Activated CD4-positive, alpha-beta T cell treated with anti-CD3 and anti-CD28 coated beads, Interleukin-2, amount 10 ng/mL, durations not matched to agents 24 days and 14 days (primary cell): ENCODE measurements at regions of chr4 and their contacts with region 1.

Region 1: DNA sequence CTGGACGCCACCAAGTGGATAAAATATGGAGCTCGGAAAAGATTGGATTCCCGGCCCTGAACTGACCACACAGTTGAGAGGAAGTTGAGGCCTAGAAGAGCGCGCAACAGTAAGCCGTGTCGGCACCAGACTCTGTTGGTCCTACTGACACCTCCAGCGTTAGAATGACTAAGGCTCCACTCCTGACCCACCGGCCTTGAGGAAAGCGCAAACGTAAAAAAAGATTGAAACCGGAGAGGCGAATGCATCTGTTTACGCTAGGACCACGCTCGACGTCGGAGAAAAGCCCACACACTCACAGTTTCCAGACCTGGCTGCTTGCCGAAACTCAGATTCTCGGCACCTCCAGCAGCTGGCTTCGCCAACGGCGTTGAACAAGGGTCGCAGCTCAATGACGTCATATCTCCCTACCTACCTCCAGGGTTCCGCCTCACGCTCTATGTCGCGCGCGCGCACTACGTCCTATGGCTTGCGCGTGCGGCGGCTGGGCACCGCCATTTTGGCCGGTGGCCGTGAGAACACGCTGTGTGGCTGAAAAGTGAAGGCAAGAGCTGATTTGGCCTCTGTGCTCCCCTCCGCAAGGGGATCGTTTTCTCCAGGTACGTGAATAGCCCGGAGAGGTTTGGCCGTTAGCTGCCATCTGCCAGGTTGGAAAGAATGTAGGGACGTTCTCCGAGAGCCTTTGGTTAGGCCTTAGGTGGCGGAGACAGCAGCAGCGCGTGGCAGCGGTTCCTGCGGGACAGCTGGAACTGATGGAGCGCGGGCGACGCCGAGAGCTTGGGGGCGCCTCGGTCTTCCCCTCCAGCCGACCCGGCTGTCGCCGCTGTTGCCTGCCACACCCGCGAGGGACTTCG is at the starts of genes ABCE1 and ANAPC10:
- DNase-seq: peak; percentile 99
- H3K4me3 Mint-ChIP-seq: peak within 1 kb of the TSS; percentile 96
- H3K27ac Mint-ChIP-seq: peak within 1 kb of the TSS; percentile 99
- H3K4me1 Mint-ChIP-seq: peaks cover 24% of the 10 kb centered on the region
- H3K27me3 Mint-ChIP-seq: no peaks in the 10 kb centered on the region
- total RNA-seq, gene ABCE1: 191 and 194 TPM in 2 replicates
- total RNA-seq, gene ANAPC10: 26.7 and 30.4 TPM in 2 replicates

Region 2: DNA sequence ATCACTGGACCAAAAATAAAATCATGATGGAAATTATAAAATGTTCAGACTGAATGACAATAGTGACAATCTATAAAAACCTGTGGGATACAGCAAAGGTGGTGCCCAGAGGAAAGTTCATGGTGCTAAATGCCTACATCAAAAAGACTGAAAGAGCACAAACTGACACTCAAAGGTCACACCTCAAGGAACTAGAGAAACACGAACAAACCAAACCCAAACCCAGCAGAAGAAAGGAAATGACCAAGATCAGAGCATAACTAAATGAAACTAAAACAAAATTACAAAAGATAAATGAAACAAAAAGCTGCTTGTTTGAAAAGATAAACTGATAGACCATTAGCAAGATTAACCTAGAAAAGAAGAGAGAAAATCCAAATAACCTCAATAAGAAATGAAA is 78.7 kb before region 1 on chr4:
- intact Hi-C with region 1: loop called (anchors 2 kb)
- DNase-seq: peak; percentile 76
- H3K4me3 Mint-ChIP-seq: peak overlapping the region; percentile 70
- H3K27ac Mint-ChIP-seq: peak overlapping the region; percentile 86
- H3K4me1 Mint-ChIP-seq: peaks cover 24% of the 10 kb centered on the region
- H3K27me3 Mint-ChIP-seq: no peaks in the 10 kb centered on the region

Region 3: DNA sequence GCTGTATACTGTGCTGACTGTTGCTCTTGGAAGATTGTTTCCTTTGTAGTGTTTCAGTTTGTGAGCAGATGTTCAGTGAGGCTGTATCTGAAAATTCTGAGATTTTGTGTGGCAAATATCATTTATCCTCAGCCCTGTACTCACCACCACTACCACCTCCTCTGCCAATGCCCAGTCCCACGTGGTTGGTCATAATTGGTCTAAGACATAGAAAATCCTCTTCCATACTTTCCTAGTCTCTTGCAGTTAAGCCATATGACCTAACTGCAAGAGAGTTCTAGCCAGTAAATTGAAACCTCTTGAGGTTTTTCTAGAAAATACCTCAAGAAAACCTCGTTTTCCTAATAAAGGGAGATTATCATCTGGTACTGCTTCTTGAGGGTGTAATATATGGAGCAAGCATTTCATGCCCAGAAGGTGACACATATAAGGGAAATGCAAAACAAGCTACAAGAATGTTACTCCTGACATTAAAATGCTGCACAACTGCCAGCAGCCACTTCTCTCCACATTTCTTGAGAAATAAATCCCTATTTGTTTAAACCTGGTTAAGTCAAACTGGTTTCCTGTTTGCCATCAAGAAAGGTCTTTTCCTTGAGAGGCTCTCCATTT is 32.8 kb after region 1 on chr4:
- intact Hi-C with region 1: loop called (anchors 1 kb)
- DNase-seq: peak; percentile 70
- H3K4me3 Mint-ChIP-seq: peak overlapping the region; percentile 43
- H3K27ac Mint-ChIP-seq: peak overlapping the region; percentile 83
- H3K4me1 Mint-ChIP-seq: peaks cover 68% of the 10 kb centered on the region
- H3K27me3 Mint-ChIP-seq: no peaks in the 10 kb centered on the region